Right ventricle myocardium inferior (tissue), 1 donor: ENCODE measurements at regions of chr4 and their contacts with region 1.

Region 1: DNA sequence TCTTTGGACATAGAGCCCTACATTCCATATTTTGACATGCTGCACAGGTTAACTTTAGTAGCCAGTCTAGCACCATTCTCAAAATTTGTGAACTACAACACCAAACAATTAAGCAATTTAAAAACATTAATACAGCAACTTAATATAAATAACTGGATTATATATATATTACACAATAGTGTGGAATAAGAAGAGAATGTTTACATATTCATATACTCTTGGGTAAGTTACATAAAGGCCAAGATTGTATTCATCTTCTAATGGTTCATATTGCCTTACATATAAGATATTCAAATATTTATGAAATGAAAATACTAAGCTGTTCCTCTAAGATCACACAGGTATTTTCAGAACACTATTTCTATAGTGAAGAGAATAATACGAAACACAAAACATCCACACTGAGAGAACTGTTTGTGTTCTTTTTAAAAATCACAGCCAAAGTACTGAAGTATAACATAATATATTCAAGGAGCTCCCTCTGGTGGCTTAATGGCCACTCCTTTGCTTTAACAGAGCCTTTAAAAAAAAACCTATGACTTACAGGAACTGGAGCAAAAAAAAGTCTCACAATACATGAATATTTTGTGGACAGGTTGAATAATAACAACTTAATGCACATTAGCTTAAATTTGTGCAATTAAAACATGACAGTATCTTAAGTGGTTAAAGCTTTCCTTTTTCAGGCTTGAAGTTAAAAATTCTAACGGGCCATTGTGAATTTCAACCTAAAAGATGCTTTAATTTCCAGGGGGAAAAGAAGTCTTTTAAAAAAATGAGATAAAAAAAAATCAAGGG is 46.2 kb downstream of the NEK1 start:
- DNase-seq: no peak
- ATAC-seq: peak; percentile 54

Region 2: GRCh38 chr4:169024762-169025161 is 541.5 kb before region 1 on chr4:
- intact Hi-C with region 1: loop called (anchors 10 kb)
- DNase-seq: no peak
- ATAC-seq: peak; percentile 78